Left cardiac atrium (tissue), 4 donors: ENCODE measurements at regions of chr7 and their contacts with region 1.

Region 1: DNA sequence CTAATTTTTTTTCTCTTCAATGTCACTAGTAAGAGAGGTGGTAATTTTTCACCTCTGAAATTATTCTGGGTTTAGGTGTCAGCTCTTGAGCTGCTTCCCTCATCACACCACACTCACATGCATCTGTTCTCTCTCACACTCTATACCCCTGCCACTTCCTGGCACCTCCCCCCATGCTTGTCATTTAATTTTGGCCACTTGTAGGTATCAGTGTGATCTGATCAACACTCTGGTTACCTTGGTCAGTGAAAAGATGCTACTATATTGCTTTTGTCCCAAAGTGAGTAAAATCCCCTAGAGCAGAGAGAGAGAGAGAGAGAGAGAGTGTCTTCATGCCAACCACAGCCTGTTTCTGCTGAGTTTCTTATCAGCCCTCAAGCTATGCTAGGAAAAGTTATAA is 42.5 kb downstream of the STK17A start:
- DNase-seq: no peak
- ATAC-seq: peak; percentile 77 to 79

Region 2: GRCh38 chr7:43693687-43694398 is 68.4 kb after region 1 on chr7:
- intact Hi-C with region 1: loop called in 1 of 2 experiments (anchors 10 kb)
- DNase-seq: no peak
- ATAC-seq: peak in 1 of 2 donors; percentile 53

Region 3: GRCh38 chr7:43856996-43857395 is 231.5 kb after region 1 on chr7:
- intact Hi-C with region 1: no loop called
- DNase-seq: no peak
- ATAC-seq: no peak

Region 4: GRCh38 chr7:44858161-44858560 is 1232.7 kb after region 1 on chr7:
- intact Hi-C with region 1: no loop called
- DNase-seq: no peak
- ATAC-seq: no peak